HEK293 (cell line): ENCODE measurements at regions of chr1 and their contacts with region 1.

Region 1: DNA sequence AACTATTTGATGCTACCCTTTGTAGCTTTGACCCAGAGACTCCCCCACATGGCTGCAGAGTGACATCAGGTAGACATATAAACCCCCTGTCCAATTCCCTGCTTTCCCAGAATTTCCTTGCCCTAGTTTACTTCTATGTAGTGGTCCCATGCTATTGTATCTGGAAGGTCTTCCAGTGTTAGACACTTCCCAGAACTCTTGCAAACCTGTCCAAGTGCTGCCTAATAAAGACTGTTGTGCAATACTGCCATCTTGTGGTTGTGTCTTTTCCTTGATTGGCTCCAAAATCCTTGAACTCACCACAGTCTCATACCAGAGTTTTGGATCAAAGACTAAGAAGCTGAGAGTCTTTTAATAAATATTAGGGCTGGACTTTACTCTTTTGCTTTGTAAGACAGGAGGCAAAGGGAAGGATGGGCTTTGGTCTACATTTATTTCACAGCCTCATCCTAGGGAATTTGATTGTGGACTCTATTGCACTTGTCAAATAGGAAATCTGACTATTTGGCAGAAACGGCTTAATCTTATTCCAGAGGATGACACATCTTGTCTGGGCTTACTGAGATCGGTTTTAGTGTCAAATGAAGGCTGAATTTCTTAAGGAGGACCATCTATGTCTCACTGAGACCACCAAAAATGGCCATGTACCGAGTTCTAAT is 169.9 kb downstream of the LRRC7 start:
- H3K4me3 ChIP-seq: no peak overlapping the region
- H3K27ac ChIP-seq: no peak overlapping the region
- H3K4me1 ChIP-seq: peaks cover 2% of the 10 kb centered on the region; the same call in 1 of the 2 replicates
- CTCF ChIP-seq: 0 out of 2 replicates have a peak, but pooled peaks have one; percentile 27

Region 2: DNA sequence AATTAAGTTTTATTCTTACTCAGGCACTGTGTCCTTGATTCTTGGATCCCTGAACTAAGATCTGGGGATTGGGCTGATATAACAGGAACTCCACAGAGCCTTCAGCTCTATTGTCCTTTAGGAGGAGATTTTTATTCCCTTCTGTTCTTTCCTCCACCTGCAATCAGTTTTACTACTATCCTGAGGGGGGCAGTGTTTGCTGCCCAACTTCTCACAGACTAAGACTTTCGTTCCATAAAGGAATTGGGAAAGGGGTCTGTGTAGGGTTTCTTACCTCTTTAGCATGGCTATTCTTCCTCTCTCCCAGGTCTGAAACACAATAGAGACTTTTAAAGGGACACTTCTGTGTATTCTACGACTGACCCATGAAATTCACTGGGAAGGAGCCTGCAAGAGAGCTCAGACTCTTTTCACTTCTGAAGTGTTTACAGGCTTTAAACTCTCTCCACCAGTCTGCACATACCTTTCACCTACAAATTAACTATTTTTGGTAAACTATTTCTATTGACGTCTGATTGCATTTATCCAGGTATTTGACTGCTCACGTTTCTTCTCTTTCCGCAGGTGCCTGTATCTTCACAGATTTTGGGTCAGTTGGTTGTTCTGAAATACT is 1137.5 kb before region 1 on chr1:
- CTCF ChIA-PET with region 1: interaction called, 10 read pairs
- POLR2A ChIA-PET with region 1: no interaction called
- H3K4me3 ChIP-seq: no peak overlapping the region
- H3K27ac ChIP-seq: no peak overlapping the region
- H3K4me1 ChIP-seq: no peaks in the 10 kb centered on the region
- CTCF ChIP-seq: no peak

Region 3: GRCh38 chr1:69263921-69264391 is 473.7 kb before region 1 on chr1:
- CTCF ChIA-PET with region 1: interaction called, 10 read pairs
- POLR2A ChIA-PET with region 1: no interaction called
- H3K4me3 ChIP-seq: no peak overlapping the region
- H3K27ac ChIP-seq: peak overlapping the region; percentile 52
- H3K4me1 ChIP-seq: peaks cover 19% of the 10 kb centered on the region
- CTCF ChIP-seq: no peak

Region 4: GRCh38 chr1:69671363-69672010 is 66.2 kb before region 1 on chr1:
- CTCF ChIA-PET with region 1: no interaction called
- POLR2A ChIA-PET with region 1: no interaction called
- H3K4me3 ChIP-seq: no peak overlapping the region
- H3K27ac ChIP-seq: no peak overlapping the region
- H3K4me1 ChIP-seq: no peaks in the 10 kb centered on the region
- CTCF ChIP-seq: no peak